Activated CD4-positive, alpha-beta memory T cell treated with anti-CD3 and anti-CD28 coated beads, Interleukin-2, amount 10 ng/mL, durations not matched to agents 7 days and 5 days (primary cell): ENCODE measurements at regions of chr1 and their contacts with region 1.

Region 1: GRCh38 chr1:173867753-173868265 is at the start of gene GAS5:
- DNase-seq: peak; percentile 100
- H3K4me3 Mint-ChIP-seq: peak within 1 kb of the TSS; percentile 92
- H3K27ac Mint-ChIP-seq: peak within 1 kb of the TSS; percentile 97
- H3K4me1 Mint-ChIP-seq: peaks cover 72% of the 10 kb centered on the region
- H3K27me3 Mint-ChIP-seq: no peaks in the 10 kb centered on the region
- total RNA-seq, gene GAS5: 379 to 394 TPM

Region 2: DNA sequence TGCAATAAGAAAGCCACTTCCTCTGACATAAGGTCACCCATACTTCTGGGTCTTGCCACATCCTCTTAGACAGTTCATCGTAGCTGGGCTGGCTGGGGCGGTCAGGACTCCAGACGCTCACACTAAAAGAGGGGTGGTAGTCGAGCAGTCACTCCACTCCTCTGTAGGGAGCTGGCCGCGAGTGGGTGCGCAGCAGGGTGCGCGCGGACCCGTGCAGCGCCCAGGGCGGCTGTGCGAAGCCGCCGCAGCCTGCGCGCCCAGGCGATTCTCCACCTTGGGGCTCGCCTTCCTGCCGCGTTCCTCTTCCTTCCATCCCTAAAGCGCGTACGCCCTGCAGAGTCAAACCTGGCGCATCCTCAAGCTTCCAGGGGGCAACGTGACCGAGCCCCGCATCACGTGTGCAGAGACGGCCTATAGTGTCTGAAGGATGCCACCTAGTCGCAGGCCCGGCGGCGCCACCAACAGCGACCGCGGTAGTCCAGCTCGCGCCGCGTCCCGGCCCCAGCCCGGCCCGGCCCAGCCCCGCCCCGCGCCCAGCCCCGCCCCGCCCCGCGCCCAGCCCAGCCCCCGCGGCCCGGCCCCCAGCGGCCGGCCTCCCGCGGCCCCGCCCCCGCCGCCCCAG is 391.0 kb before region 1 on chr1:
- CTCF ChIA-PET with region 1: no interaction called
- POLR2A ChIA-PET with region 1: interaction called, 43 read pairs
- DNase-seq: peak; percentile 85
- H3K4me3 Mint-ChIP-seq: peak overlapping the region; percentile 91
- H3K27ac Mint-ChIP-seq: peak overlapping the region; percentile 95
- H3K4me1 Mint-ChIP-seq: peaks cover 56% of the 10 kb centered on the region
- H3K27me3 Mint-ChIP-seq: no peaks in the 10 kb centered on the region

Region 3: GRCh38 chr1:173824331-173825081 is 43.3 kb before region 1 on chr1 and contains the starts of genes CENPL and DARS2:
- CTCF ChIA-PET with region 1: interaction called, 9 read pairs
- POLR2A ChIA-PET with region 1: interaction called, 139 read pairs
- DNase-seq: peak; percentile 94
- H3K4me3 Mint-ChIP-seq: peak within 1 kb of the TSS; percentile 85
- H3K27ac Mint-ChIP-seq: peak within 1 kb of the TSS; percentile 95
- H3K4me1 Mint-ChIP-seq: peaks cover 61% of the 10 kb centered on the region
- H3K27me3 Mint-ChIP-seq: no peaks in the 10 kb centered on the region
- total RNA-seq, gene CENPL: 28.2 to 29.4 TPM
- total RNA-seq, gene DARS2: 26.3 to 26.4 TPM

Region 4: GRCh38 chr1:173997796-173998195 is 130.0 kb after region 1 on chr1:
- CTCF ChIA-PET with region 1: no interaction called
- POLR2A ChIA-PET with region 1: no interaction called
- DNase-seq: no peak
- H3K4me3 Mint-ChIP-seq: no peak overlapping the region
- H3K27ac Mint-ChIP-seq: no peak overlapping the region
- H3K4me1 Mint-ChIP-seq: peaks cover 22% of the 10 kb centered on the region
- H3K27me3 Mint-ChIP-seq: no peaks in the 10 kb centered on the region

Region 5: GRCh38 chr1:174022080-174022975 is 154.5 kb after region 1 on chr1 and contains the start of gene RC3H1:
- CTCF ChIA-PET with region 1: no interaction called
- POLR2A ChIA-PET with region 1: interaction called, 29 read pairs
- DNase-seq: peak; percentile 92
- H3K4me3 Mint-ChIP-seq: peak within 1 kb of the TSS; percentile 96
- H3K27ac Mint-ChIP-seq: peak within 1 kb of the TSS; percentile 89
- H3K4me1 Mint-ChIP-seq: peaks cover 37% of the 10 kb centered on the region
- H3K27me3 Mint-ChIP-seq: peaks cover 2% of the 10 kb centered on the region
- total RNA-seq, gene RC3H1: 29.6 to 33.6 TPM

Region 6: GRCh38 chr1:174159252-174160108 is 291.7 kb after region 1 on chr1 and contains the start of gene RABGAP1L:
- CTCF ChIA-PET with region 1: no interaction called
- POLR2A ChIA-PET with region 1: interaction called, 18 read pairs
- DNase-seq: peak; percentile 95
- H3K4me3 Mint-ChIP-seq: peak within 1 kb of the TSS; percentile 84
- H3K27ac Mint-ChIP-seq: peak within 1 kb of the TSS; percentile 93
- H3K4me1 Mint-ChIP-seq: peaks cover 60% of the 10 kb centered on the region
- H3K27me3 Mint-ChIP-seq: no peaks in the 10 kb centered on the region
- total RNA-seq, gene RABGAP1L: 76.8 to 80.5 TPM

Region 7: GRCh38 chr1:174999216-174999925 is 1131.6 kb after region 1 on chr1:
- CTCF ChIA-PET with region 1: no interaction called
- POLR2A ChIA-PET with region 1: interaction called, 12 read pairs
- DNase-seq: peak; percentile 98
- H3K4me3 Mint-ChIP-seq: no peak overlapping the region
- H3K27ac Mint-ChIP-seq: no peak overlapping the region
- H3K4me1 Mint-ChIP-seq: peaks cover 39% of the 10 kb centered on the region
- H3K27me3 Mint-ChIP-seq: no peaks in the 10 kb centered on the region